ENCODE measurements at regions of chr12 and their contacts with region 1.

Region 1: GRCh38 chr12:27779920-27780611 is at the starts of genes KLHL42 and MANSC4:
- DNase-seq: peak; percentile 58 to 94 (median 62)

Region 2: GRCh38 chr12:27710592-27711316 is 69.3 kb before region 1 on chr12 and contains the start of gene MRPS35:
- intact Hi-C with region 1: loop called (anchors 2 kb)
- DNase-seq: peak; percentile 86 to 98 (median 92)